MCF 10A (cell line): ENCODE measurements at regions of chr20 and their contacts with region 1.

Region 1: GRCh38 chr20:9609887-9610502 is 95.6 kb downstream of the LAMP5 start:
- DNase-seq: peak; percentile 82
- H3K4me3 Mint-ChIP-seq: no peak overlapping the region
- H3K27ac Mint-ChIP-seq: no peak overlapping the region
- H3K4me1 Mint-ChIP-seq: no peaks in the 10 kb centered on the region
- H3K27me3 Mint-ChIP-seq: peaks cover 17% of the 10 kb centered on the region
- CTCF ChIP-seq: peak; percentile 49

Region 2: DNA sequence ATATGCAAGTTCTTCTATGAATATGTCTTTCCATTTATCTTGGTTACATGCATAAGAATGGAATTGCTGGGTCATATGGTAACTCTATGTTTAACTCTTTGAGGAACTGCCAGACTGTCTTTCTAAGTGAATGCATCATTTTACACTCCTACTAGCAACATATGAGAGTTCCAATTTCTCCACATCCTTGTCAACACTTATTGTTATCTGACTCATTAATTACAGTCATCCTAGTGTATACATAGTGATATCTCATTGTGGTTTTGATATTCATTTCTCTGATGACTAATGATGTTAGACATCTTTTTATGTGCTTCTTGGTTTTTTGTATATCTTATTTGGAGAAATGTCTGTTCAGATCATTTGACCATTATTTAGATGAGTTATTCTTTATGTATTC is 192.3 kb before region 1 on chr20:
- CTCF ChIA-PET with region 1: interaction called, 748 read pairs
- POLR2A ChIA-PET with region 1: interaction called, 3 read pairs
- intact Hi-C with region 1: no loop called
- DNase-seq: no peak
- H3K4me3 Mint-ChIP-seq: no peak overlapping the region
- H3K27ac Mint-ChIP-seq: no peak overlapping the region
- H3K4me1 Mint-ChIP-seq: no peaks in the 10 kb centered on the region
- H3K27me3 Mint-ChIP-seq: no peaks in the 10 kb centered on the region
- CTCF ChIP-seq: no peak

Region 3: DNA sequence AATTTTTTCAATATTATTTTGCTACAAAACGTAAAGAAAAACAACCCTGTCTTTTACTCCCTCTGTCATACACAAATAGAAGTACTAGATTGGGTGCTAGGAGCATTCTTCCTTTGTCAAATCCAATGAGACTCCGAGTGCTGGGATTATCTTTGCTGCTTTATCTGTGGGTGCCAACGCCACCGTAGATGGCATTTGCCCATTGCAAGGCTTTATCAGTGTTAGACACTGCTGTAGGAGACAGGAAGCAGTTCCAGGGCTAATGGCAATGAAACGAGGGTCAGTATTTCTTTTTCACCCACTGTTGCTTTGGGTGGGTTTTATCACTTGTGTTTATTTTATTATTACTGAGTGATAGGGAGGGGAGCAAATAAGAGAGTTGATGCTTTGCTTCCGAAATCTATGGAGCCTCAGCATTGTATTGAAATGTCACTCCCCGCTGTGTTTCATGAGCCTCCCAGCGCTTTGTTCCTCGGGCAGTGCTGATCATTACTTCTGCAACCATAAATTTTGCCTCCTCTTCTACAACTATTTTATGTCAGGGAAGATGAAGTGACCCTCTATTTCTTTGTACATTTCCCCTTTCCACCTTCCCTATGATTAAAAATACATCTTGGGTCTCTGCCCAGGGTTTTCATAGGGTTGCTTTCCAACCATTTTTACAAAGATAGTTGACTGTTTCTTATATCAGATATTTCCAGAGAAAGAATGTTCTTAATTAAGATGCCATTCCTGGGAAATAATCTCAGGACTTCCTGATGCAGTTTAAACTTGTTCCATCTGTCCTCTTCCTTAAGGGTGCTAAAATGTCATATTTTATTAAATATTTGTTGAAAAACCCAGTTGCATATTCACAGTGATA is 182.3 kb before region 1 on chr20:
- CTCF ChIA-PET with region 1: interaction called, 26 read pairs
- POLR2A ChIA-PET with region 1: interaction called, 3 read pairs
- intact Hi-C with region 1: no loop called
- DNase-seq: no peak
- H3K4me3 Mint-ChIP-seq: no peak overlapping the region
- H3K27ac Mint-ChIP-seq: no peak overlapping the region
- H3K4me1 Mint-ChIP-seq: no peaks in the 10 kb centered on the region
- H3K27me3 Mint-ChIP-seq: no peaks in the 10 kb centered on the region
- CTCF ChIP-seq: no peak

Region 4: DNA sequence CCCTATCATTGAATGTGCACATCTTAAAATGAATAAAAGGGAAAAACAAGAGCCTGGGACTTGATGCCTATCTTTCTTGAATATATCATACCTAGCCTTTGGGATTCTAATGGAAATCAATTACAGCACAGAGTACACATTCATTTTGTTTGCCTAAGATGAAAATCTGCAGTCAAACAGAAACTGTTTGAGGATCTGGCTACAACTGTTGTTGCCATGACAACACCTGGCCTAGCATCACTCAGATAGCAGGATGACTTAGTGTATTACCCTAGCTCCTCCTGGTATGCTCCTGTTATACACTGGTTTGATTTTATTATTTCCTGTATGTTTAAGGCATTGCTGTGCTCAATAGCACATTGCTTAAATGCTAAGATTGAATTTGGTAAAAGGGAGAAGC is 167.1 kb before region 1 on chr20:
- CTCF ChIA-PET with region 1: interaction called, 12 read pairs
- POLR2A ChIA-PET with region 1: no interaction called
- intact Hi-C with region 1: no loop called
- DNase-seq: no peak
- H3K4me3 Mint-ChIP-seq: no peak overlapping the region
- H3K27ac Mint-ChIP-seq: no peak overlapping the region
- H3K4me1 Mint-ChIP-seq: no peaks in the 10 kb centered on the region
- H3K27me3 Mint-ChIP-seq: no peaks in the 10 kb centered on the region
- CTCF ChIP-seq: no peak

Region 5: DNA sequence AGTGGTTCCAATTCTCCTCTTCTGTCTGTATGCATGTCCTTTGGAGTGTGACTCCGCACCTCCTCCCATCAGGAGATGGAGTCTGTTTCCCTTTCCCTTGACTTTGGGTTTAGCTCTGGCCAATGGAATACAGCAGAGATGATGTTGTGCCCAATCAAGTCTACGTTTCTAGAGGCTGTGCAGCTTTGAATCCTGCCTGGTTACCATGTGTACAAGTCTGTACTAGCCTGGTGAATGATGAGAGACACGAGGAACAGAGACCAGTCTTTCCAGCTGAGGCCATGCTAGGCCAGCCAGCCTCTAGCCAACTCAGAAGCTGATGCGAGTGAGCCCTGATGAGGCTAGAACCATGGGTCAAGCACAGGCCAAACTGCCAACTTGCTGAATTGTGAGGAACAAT is 12.4 kb before region 1 on chr20:
- CTCF ChIA-PET with region 1: interaction called, 22 read pairs
- POLR2A ChIA-PET with region 1: no interaction called
- intact Hi-C with region 1: no loop called
- DNase-seq: no peak
- H3K4me3 Mint-ChIP-seq: no peak overlapping the region
- H3K27ac Mint-ChIP-seq: no peak overlapping the region
- H3K4me1 Mint-ChIP-seq: no peaks in the 10 kb centered on the region
- H3K27me3 Mint-ChIP-seq: no peaks in the 10 kb centered on the region
- CTCF ChIP-seq: no peak

Region 6: GRCh38 chr20:9626357-9626756 is 16.4 kb after region 1 on chr20:
- CTCF ChIA-PET with region 1: interaction called, 12 read pairs
- POLR2A ChIA-PET with region 1: no interaction called
- intact Hi-C with region 1: no loop called
- DNase-seq: peak; percentile 39
- H3K4me3 Mint-ChIP-seq: no peak overlapping the region
- H3K27ac Mint-ChIP-seq: no peak overlapping the region
- H3K4me1 Mint-ChIP-seq: no peaks in the 10 kb centered on the region
- H3K27me3 Mint-ChIP-seq: peaks cover 10% of the 10 kb centered on the region
- CTCF ChIP-seq: no peak

Region 7: GRCh38 chr20:9668381-9668780 is 58.4 kb after region 1 on chr20:
- CTCF ChIA-PET with region 1: no interaction called
- POLR2A ChIA-PET with region 1: no interaction called
- intact Hi-C with region 1: no loop called
- DNase-seq: no peak
- H3K4me3 Mint-ChIP-seq: no peak overlapping the region
- H3K27ac Mint-ChIP-seq: no peak overlapping the region
- H3K4me1 Mint-ChIP-seq: no peaks in the 10 kb centered on the region
- H3K27me3 Mint-ChIP-seq: no peaks in the 10 kb centered on the region
- CTCF ChIP-seq: no peak

Region 8: GRCh38 chr20:10412591-10413408 is 802.8 kb after region 1 on chr20:
- CTCF ChIA-PET with region 1: interaction called, 10 read pairs
- POLR2A ChIA-PET with region 1: no interaction called
- intact Hi-C with region 1: no loop called
- DNase-seq: no peak
- H3K4me3 Mint-ChIP-seq: no peak overlapping the region
- H3K27ac Mint-ChIP-seq: no peak overlapping the region
- H3K4me1 Mint-ChIP-seq: peaks cover 28% of the 10 kb centered on the region
- H3K27me3 Mint-ChIP-seq: no peaks in the 10 kb centered on the region
- CTCF ChIP-seq: no peak